PC-9 (cell line): ENCODE measurements at regions of chr12 and their contacts with region 1.

Region 1: GRCh38 chr12:105455260-105455659 is 124.8 kb downstream of the C12orf75 start:
- DNase-seq: peak; percentile 38 to 62
- H3K4me3 ChIP-seq: no peak overlapping the region
- H3K27ac ChIP-seq: no peak overlapping the region
- H3K4me1 ChIP-seq: 0 out of 2 replicates have a peak, but pooled peaks cover 6% of the 10 kb centered on the region
- H3K27me3 ChIP-seq: no peaks in the 10 kb centered on the region
- CTCF ChIP-seq: no peak

Region 2: GRCh38 chr12:105485921-105486320 is 30.7 kb after region 1 on chr12:
- CTCF ChIA-PET with region 1: no interaction called
- POLR2A ChIA-PET with region 1: no interaction called
- intact Hi-C with region 1: loop called (anchors 1 kb)
- DNase-seq: peak in 1 of 2 experiments; percentile 38
- H3K4me3 ChIP-seq: no peak overlapping the region
- H3K27ac ChIP-seq: peak overlapping the region; percentile 52
- H3K4me1 ChIP-seq: peaks cover 16% of the 10 kb centered on the region
- H3K27me3 ChIP-seq: no peaks in the 10 kb centered on the region
- CTCF ChIP-seq: no peak

Region 3: GRCh38 chr12:105562199-105562971 is 107.1 kb after region 1 on chr12:
- CTCF ChIA-PET with region 1: no interaction called
- POLR2A ChIA-PET with region 1: no interaction called
- intact Hi-C with region 1: loop called (anchors 5 kb)
- DNase-seq: peak; percentile 66 to 84
- H3K4me3 ChIP-seq: peak overlapping the region; percentile 55; the same call in 1 of the 2 replicates
- H3K27ac ChIP-seq: peak overlapping the region; percentile 74
- H3K4me1 ChIP-seq: peaks cover 26% of the 10 kb centered on the region
- H3K27me3 ChIP-seq: no peaks in the 10 kb centered on the region
- CTCF ChIP-seq: no peak